MCF 10A (cell line): ENCODE measurements at regions of chr4 and their contacts with region 1.

Region 1: GRCh38 chr4:112853662-112854256 is 195.7 kb upstream of the ANK2 start:
- DNase-seq: peak; percentile 37
- H3K4me3 Mint-ChIP-seq: no peak overlapping the region
- H3K27ac Mint-ChIP-seq: no peak overlapping the region
- H3K4me1 Mint-ChIP-seq: peaks cover 8% of the 10 kb centered on the region
- H3K27me3 Mint-ChIP-seq: no peaks in the 10 kb centered on the region
- CTCF ChIP-seq: peak; percentile 52

Region 2: DNA sequence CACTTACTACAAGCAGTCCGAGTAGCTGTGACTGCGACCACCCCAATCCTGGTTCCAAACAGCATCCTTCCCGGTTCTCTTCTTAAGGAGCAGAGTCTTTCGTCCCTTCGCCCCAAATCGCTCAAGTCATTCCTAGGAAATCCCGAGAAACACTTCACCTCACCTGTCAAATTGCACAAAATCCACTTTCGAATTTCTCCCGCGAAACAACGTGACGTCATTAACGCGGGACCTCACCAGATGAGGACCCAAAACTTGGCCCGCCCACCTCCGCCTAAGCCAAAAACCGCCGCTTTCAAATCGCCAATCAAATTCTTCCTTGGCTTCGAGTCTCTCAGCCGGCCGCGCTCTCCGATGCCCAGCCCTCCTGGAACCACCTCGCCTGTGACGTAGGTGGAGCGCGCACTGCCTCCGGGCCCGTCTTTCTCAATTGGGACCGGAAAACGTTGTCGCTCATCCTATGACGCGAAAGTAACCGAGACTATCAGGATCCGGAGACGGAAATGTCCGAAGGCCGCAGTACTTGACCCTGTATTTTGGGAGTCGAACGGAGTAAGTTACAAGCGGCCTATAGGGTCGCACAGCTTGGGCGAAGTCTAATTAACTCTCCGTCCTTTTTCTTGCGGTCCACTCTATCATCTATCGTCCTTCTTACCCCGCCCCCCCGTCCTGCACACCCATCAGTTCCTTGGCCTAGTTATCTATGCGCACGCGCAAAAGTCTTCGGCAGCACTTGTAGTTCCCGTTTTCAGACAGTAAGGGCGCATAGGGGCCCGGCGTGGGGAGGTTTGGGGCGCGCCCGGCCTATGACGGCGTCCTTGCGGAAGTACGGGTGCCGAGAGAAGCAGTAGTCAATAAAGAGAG is 216.8 kb before region 1 on chr4 and contains the starts of genes LARP7 and ZGRF1:
- CTCF ChIA-PET with region 1: interaction called, 3 read pairs
- POLR2A ChIA-PET with region 1: no interaction called
- intact Hi-C with region 1: loop called (anchors 10 kb)
- DNase-seq: peak; percentile 99
- H3K4me3 Mint-ChIP-seq: no peak within 1 kb of the TSS
- H3K27ac Mint-ChIP-seq: no peak within 1 kb of the TSS
- H3K4me1 Mint-ChIP-seq: peaks cover 13% of the 10 kb centered on the region
- H3K27me3 Mint-ChIP-seq: no peaks in the 10 kb centered on the region
- CTCF ChIP-seq: peak; percentile 88
- total RNA-seq, gene LARP7: 33.8 and 36.3 TPM in 2 replicates
- total RNA-seq, gene ZGRF1: 6.1 and 6.9 TPM in 2 replicates

Region 3: DNA sequence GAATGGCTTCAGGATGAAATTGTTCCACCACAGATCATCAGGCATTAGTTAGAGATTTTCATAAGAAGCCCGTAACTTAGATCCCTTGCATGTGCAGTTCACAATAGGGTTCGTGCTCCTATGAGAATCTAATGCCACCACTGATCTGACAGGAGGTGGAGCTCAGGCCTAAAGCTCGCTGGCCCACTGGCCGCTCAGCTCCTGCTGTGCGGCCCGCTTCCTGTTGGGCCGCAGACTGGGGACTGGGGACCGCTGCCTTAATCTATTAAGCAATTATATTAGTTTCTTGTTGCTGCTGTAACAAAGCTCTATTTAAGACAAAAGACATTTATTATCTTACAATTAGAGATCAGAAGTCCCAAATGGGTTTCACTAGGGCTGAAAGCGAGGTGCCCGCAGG is 11.2 kb before region 1 on chr4:
- CTCF ChIA-PET with region 1: interaction called, 28 read pairs
- POLR2A ChIA-PET with region 1: no interaction called
- intact Hi-C with region 1: no loop called
- DNase-seq: no peak
- H3K4me3 Mint-ChIP-seq: no peak overlapping the region
- H3K27ac Mint-ChIP-seq: no peak overlapping the region
- H3K4me1 Mint-ChIP-seq: peaks cover under 1% of the 10 kb centered on the region
- H3K27me3 Mint-ChIP-seq: no peaks in the 10 kb centered on the region
- CTCF ChIP-seq: no peak

Region 4: DNA sequence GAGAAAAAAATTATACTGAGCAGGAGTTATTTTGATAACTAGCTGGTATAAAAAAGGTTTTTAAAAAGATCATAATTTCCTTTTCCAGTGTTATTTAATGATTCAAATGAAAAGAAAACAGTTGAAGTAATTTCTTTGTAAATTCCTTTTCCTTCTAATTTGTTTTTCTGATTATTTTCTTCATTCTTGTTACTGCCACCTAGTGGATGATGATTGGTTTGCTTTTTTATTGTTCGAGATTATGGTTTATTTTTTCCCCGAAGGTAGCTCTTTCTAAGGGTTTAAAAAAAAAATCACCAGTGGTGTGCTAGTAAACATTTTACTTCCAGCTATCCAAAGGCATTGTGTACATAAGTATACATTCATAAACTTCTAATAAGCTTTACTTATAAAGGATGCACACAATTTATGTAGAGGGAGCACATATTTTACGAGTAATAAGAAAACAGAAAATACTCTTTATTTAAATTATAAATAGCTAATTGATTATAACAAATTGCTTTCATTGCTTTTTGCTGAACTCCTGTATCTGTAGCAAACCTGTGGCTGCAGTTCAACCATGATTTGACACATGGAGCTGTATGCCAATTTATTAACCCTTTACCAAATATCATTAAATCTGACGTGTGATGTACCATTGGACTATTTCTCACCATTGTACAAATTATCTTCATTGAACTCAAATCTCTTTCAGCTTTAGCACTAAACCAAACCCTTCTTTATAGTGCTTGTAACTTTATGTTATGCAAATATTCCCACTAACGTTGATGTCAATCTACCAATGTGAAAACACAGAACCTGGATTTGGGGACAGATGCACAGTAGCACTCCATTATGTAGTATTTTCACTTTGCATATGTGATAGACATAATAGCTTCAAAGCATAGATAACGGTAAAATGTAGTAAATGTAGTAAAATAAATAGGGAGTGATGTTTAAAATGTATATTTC is 97.9 kb after region 1 on chr4:
- CTCF ChIA-PET with region 1: interaction called, 13 read pairs
- POLR2A ChIA-PET with region 1: no interaction called
- intact Hi-C with region 1: no loop called
- DNase-seq: peak; percentile 21
- H3K4me3 Mint-ChIP-seq: no peak overlapping the region
- H3K27ac Mint-ChIP-seq: no peak overlapping the region
- H3K4me1 Mint-ChIP-seq: no peaks in the 10 kb centered on the region
- H3K27me3 Mint-ChIP-seq: no peaks in the 10 kb centered on the region
- CTCF ChIP-seq: peak; percentile 18

Region 5: GRCh38 chr4:113094802-113095201 is 241.0 kb after region 1 on chr4:
- CTCF ChIA-PET with region 1: interaction called, 4 read pairs
- POLR2A ChIA-PET with region 1: no interaction called
- intact Hi-C with region 1: loop called (anchors 2 kb)
- DNase-seq: peak; percentile 22
- H3K4me3 Mint-ChIP-seq: no peak overlapping the region
- H3K27ac Mint-ChIP-seq: no peak overlapping the region
- H3K4me1 Mint-ChIP-seq: peaks cover 7% of the 10 kb centered on the region
- H3K27me3 Mint-ChIP-seq: no peaks in the 10 kb centered on the region
- CTCF ChIP-seq: peak; percentile 83

Region 6: GRCh38 chr4:113243312-113243711 is 389.6 kb after region 1 on chr4:
- CTCF ChIA-PET with region 1: no interaction called
- POLR2A ChIA-PET with region 1: no interaction called
- intact Hi-C with region 1: no loop called
- DNase-seq: no peak
- H3K4me3 Mint-ChIP-seq: no peak overlapping the region
- H3K27ac Mint-ChIP-seq: no peak overlapping the region
- H3K4me1 Mint-ChIP-seq: no peaks in the 10 kb centered on the region
- H3K27me3 Mint-ChIP-seq: no peaks in the 10 kb centered on the region
- CTCF ChIP-seq: no peak